ENCODE measurements at regions of chr20 and their contacts with region 1.

Region 1: GRCh38 chr20:46520976-46521579 is 7.7 kb upstream of the ZNF334 start:
- DNase-seq: peak in 2 of 5 donors; percentile 19 to 39
- ATAC-seq: peak in 2 of 4 donors; percentile 62 to 80
- H3K4me3 ChIP-seq: no peak overlapping the region
- H3K27ac ChIP-seq: no peak overlapping the region
- H3K4me1 ChIP-seq: no peaks in the 10 kb centered on the region
- H3K27me3 ChIP-seq: peaks cover 0 to 29% (median 0%) of the 10 kb centered on the region in 9 donors
- CTCF ChIP-seq: peak; percentile 31 to 64 (median 50)
- POLR2A ChIP-seq: no peak

Region 2: GRCh38 chr20:46477225-46477624 is 43.9 kb before region 1 on chr20:
- intact Hi-C with region 1: loop called in 1 of 10 experiments (anchors 5 kb)
- DNase-seq: no peak
- ATAC-seq: no peak
- H3K4me3 ChIP-seq: no peak overlapping the region
- H3K27ac ChIP-seq: no peak overlapping the region
- H3K4me1 ChIP-seq: no peaks in the 10 kb centered on the region
- H3K27me3 ChIP-seq: peaks cover 0 to 12% (median 0%) of the 10 kb centered on the region in 9 donors
- CTCF ChIP-seq: no peak
- POLR2A ChIP-seq: no peak

Region 3: GRCh38 chr20:46681032-46681854 is 160.2 kb after region 1 on chr20:
- intact Hi-C with region 1: loop called in 7 of 10 experiments (anchors 1 to 5 kb)
- DNase-seq: peak in 3 of 5 donors; percentile 24 to 40 (median 35)
- ATAC-seq: peak in 2 of 4 donors; percentile 28 to 49
- H3K4me3 ChIP-seq: no peak overlapping the region
- H3K27ac ChIP-seq: no peak overlapping the region
- H3K4me1 ChIP-seq: peaks cover 0 to 31% (median 20%) of the 10 kb centered on the region in 12 donors
- H3K27me3 ChIP-seq: no peaks in the 10 kb centered on the region
- CTCF ChIP-seq: peak; percentile 56 to 80 (median 77)
- POLR2A ChIP-seq: no peak

Measured in heart left ventricle (tissue), 16 donors.